B cell (primary cell): ENCODE measurements at regions of chr7 and their contacts with region 1.

Region 1: GRCh38 chr7:101602484-101603241 is 26.4 kb downstream of the MYL10 start:
- DNase-seq: peak; percentile 73
- ATAC-seq: peak; percentile 81
- H3K4me3 ChIP-seq: no peak overlapping the region
- H3K4me3 Mint-ChIP-seq: no peak overlapping the region
- H3K27ac ChIP-seq: no peak overlapping the region
- H3K27ac Mint-ChIP-seq: no peak overlapping the region
- H3K4me1 ChIP-seq: peaks cover 0 to 5% of the 10 kb centered on the region in 2 donors
- H3K4me1 Mint-ChIP-seq: no peaks in the 10 kb centered on the region
- H3K27me3 ChIP-seq: peaks cover 0 to 4% (median 0%) of the 10 kb centered on the region in 4 experiments
- H3K27me3 Mint-ChIP-seq: no peaks in the 10 kb centered on the region
- CTCF ChIP-seq: peak; percentile 89

Region 2: GRCh38 chr7:101542527-101543241 is 60.0 kb before region 1 on chr7:
- CTCF ChIA-PET with region 1: interaction called, 5 read pairs
- POLR2A ChIA-PET with region 1: no interaction called
- intact Hi-C with region 1: loop called (anchors 1 kb)
- DNase-seq: peak; percentile 77
- ATAC-seq: peak; percentile 68
- H3K4me3 ChIP-seq: no peak overlapping the region
- H3K4me3 Mint-ChIP-seq: no peak overlapping the region
- H3K27ac ChIP-seq: no peak overlapping the region
- H3K27ac Mint-ChIP-seq: no peak overlapping the region
- H3K4me1 ChIP-seq: no peaks in the 10 kb centered on the region
- H3K4me1 Mint-ChIP-seq: no peaks in the 10 kb centered on the region
- H3K27me3 ChIP-seq: peaks cover 0 to 10% (median 1%) of the 10 kb centered on the region in 4 experiments
- H3K27me3 Mint-ChIP-seq: peaks cover 5% of the 10 kb centered on the region
- CTCF ChIP-seq: peak; percentile 88

Region 3: GRCh38 chr7:102272075-102272917 is 669.6 kb after region 1 on chr7:
- CTCF ChIA-PET with region 1: interaction called, 36 read pairs
- POLR2A ChIA-PET with region 1: no interaction called
- intact Hi-C with region 1: loop called (anchors 1 kb)
- DNase-seq: peak; percentile 79
- ATAC-seq: peak; percentile 87
- H3K4me3 ChIP-seq: no peak overlapping the region
- H3K4me3 Mint-ChIP-seq: no peak overlapping the region
- H3K27ac ChIP-seq: no peak overlapping the region
- H3K27ac Mint-ChIP-seq: no peak overlapping the region
- H3K4me1 ChIP-seq: peaks cover 0 to 3% of the 10 kb centered on the region in 2 donors
- H3K4me1 Mint-ChIP-seq: peaks cover 2% of the 10 kb centered on the region
- H3K27me3 ChIP-seq: no peaks in the 10 kb centered on the region
- H3K27me3 Mint-ChIP-seq: no peaks in the 10 kb centered on the region
- CTCF ChIP-seq: peak; percentile 95